ENCODE measurements at regions of chr10 and their contacts with region 1.

Region 1: GRCh38 chr10:13724484-13724883 is 137.7 kb downstream of the PRPF18 start:
- DNase-seq: peak; percentile 67
- ATAC-seq: peak; percentile 89

Region 2: DNA sequence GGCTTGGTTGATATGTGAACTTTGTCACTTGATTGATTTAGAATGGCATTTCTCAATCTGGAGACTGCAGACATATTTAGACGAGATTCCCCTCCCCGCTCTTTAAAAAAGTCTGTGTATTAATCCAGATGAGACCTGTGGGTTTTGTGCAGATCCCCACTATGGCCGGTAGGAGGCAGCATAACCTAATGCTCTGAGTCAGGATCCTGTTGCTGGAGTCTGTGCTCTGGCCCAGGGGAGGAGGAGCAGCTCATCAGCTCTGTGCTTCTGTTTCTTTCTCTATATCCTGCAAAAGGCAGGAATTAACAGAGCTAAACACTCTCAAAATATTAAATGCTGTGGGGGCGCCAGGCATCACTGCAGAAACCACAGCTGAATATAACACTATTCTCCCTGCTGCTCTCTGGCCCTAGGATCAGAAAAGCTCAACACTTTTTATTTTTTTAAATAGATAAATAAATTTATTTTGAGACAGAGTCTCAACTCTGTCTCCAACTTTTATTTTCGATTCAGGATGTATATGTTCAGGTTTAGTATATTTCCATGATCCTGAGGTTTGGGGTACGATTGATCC is 352.5 kb before region 1 on chr10:
- intact Hi-C with region 1: no loop called
- DNase-seq: peak; percentile 55
- ATAC-seq: peak; percentile 91

Region 3: GRCh38 chr10:13673156-13673555 is 51.3 kb before region 1 on chr10:
- intact Hi-C with region 1: loop called (anchors 10 kb)
- DNase-seq: no peak
- ATAC-seq: no peak

Measured in left ventricle myocardium superior (tissue), 1 donor.